ENCODE measurements at regions of chr6 and their contacts with region 1.

Region 1: GRCh38 chr6:27132532-27133280 is 114.8 kb upstream of the PRSS16 start:
- DNase-seq: peak; percentile 87
- ATAC-seq: peak; percentile 96

Region 2: GRCh38 chr6:26285143-26286134 is 847.3 kb before region 1 on chr6:
- intact Hi-C with region 1: loop called (anchors 2 kb)
- DNase-seq: peak; percentile 98
- ATAC-seq: peak; percentile 94

Region 3: GRCh38 chr6:27114792-27115191 is 17.9 kb before region 1 on chr6:
- intact Hi-C with region 1: no loop called
- DNase-seq: no peak
- ATAC-seq: no peak

Region 4: DNA sequence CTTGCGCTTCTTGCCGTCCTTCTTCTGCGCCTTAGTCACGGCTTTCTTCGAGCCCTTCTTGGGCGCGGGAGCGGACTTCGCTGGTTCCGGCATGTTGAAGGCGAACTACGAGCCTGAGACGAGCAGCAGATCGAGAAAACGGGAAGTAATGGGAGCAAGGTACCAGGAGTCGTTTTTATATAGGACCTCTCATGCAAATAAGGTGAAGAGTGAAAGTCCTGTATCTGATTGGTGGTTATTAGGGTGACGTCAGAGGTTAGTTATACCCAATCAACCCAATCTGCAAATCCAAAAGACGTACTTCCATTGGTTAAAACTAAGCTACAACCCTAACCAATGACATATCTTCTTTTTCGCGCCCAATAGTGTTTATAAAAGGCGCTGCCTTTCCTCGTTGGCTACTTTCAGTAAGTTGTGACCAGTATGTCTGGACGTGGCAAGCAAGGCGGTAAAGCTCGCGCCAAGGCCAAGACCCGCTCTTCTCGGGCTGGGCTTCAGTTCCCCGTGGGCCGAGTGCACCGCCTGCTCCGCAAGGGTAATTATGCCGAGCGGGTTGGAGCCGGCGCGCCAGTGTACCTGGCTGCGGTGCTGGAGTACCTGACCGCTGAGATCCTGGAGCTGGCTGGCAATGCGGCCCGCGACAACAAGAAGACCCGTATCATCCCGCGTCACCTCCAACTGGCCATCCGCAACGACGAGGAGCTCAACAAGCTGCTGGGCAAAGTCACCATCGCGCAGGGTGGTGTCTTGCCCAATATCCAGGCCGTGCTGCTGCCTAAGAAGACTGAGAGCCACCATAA is 14.2 kb after region 1 on chr6:
- intact Hi-C with region 1: loop called (anchors 2 kb)
- DNase-seq: peak; percentile 86
- ATAC-seq: peak; percentile 96

Measured in Right ventricle myocardium inferior (tissue), 1 donor.